Ascending aorta (tissue), 2 donors: ENCODE measurements at regions of chr9 and their contacts with region 1.

Region 1: GRCh38 chr9:83920927-83921707 is at the start of gene KIF27:
- DNase-seq: peak; percentile 95 to 99
- H3K4me3 ChIP-seq: peak within 1 kb of the TSS; percentile 93 to 99
- H3K27ac ChIP-seq: peak within 1 kb of the TSS; percentile 95 to 99
- H3K4me1 ChIP-seq: no peaks in the 10 kb centered on the region
- H3K27me3 ChIP-seq: no peaks in the 10 kb centered on the region
- CTCF ChIP-seq: peak in 2 of 3 experiments; percentile 41 to 67
- total RNA-seq, gene KIF27: 1.9 TPM

Region 2: GRCh38 chr9:83620841-83621636 is 300.1 kb before region 1 on chr9:
- intact Hi-C with region 1: no loop called
- DNase-seq: no peak
- H3K4me3 ChIP-seq: no peak overlapping the region
- H3K27ac ChIP-seq: no peak overlapping the region
- H3K4me1 ChIP-seq: peaks cover 0 to 5% of the 10 kb centered on the region in 2 donors
- H3K27me3 ChIP-seq: no peaks in the 10 kb centered on the region
- CTCF ChIP-seq: peak; percentile 10 to 68 (median 66)

Region 3: GRCh38 chr9:83707768-83708514 is 213.2 kb before region 1 on chr9 and contains the start of gene UBQLN1:
- intact Hi-C with region 1: loop called (anchors 2 kb)
- DNase-seq: peak; percentile 72 to 95
- H3K4me3 ChIP-seq: peak within 1 kb of the TSS; percentile 88 to 96
- H3K27ac ChIP-seq: peak within 1 kb of the TSS; percentile 98 to 99
- H3K4me1 ChIP-seq: no peaks in the 10 kb centered on the region
- H3K27me3 ChIP-seq: no peaks in the 10 kb centered on the region
- CTCF ChIP-seq: no peak
- total RNA-seq, gene UBQLN1: 118 TPM

Region 4: GRCh38 chr9:83956434-83957247 is 35.5 kb after region 1 on chr9:
- intact Hi-C with region 1: loop called (anchors 2 kb)
- DNase-seq: peak in 1 of 2 donors; percentile 86
- H3K4me3 ChIP-seq: peak overlapping the region; percentile 72 to 75
- H3K27ac ChIP-seq: peak overlapping the region; percentile 78 to 90
- H3K4me1 ChIP-seq: peaks cover 0 to 4% of the 10 kb centered on the region in 2 donors
- H3K27me3 ChIP-seq: no peaks in the 10 kb centered on the region
- CTCF ChIP-seq: no peak